Endothelial cell of umbilical vein (primary cell): ENCODE measurements at regions of chr2 and their contacts with region 1.

Region 1: GRCh38 chr2:187037310-187037709 is 188.3 kb upstream of the ZSWIM2 start:
- DNase-seq: no peak
- H3K4me3 ChIP-seq: no peak overlapping the region
- H3K27ac ChIP-seq: no peak overlapping the region
- H3K4me1 ChIP-seq: no peaks in the 10 kb centered on the region
- H3K27me3 ChIP-seq: no peaks in the 10 kb centered on the region
- CTCF ChIP-seq: no peak
- POLR2A ChIP-seq: no peak

Region 2: GRCh38 chr2:186934420-186934819 is 102.9 kb before region 1 on chr2:
- CTCF ChIA-PET with region 1: no interaction called
- POLR2A ChIA-PET with region 1: no interaction called
- dilution Hi-C with region 1: no loop called
- intact Hi-C with region 1: loop called (anchors 5 kb)
- DNase-seq: no peak
- H3K4me3 ChIP-seq: no peak overlapping the region
- H3K27ac ChIP-seq: no peak overlapping the region
- H3K4me1 ChIP-seq: no peaks in the 10 kb centered on the region
- H3K27me3 ChIP-seq: no peaks in the 10 kb centered on the region
- CTCF ChIP-seq: no peak
- POLR2A ChIP-seq: no peak